ENCODE measurements at regions of chr11 and their contacts with region 1.

Region 1: GRCh38 chr11:2444821-2445745 is at the start of gene KCNQ1:
- DNase-seq: peak in 9 of 10 donors; percentile 14 to 65 (median 40)
- ATAC-seq: peak; percentile 49 to 54
- H3K4me3 Mint-ChIP-seq: peak within 1 kb of the TSS; percentile 89 to 97 (median 96)
- H3K27ac Mint-ChIP-seq: peak within 1 kb of the TSS; percentile 77 to 94 (median 88)
- H3K4me1 Mint-ChIP-seq: peaks cover 28 to 58% (median 53%) of the 10 kb centered on the region in 4 donors
- H3K27me3 Mint-ChIP-seq: no peaks in the 10 kb centered on the region
- polyA plus RNA-seq, gene KCNQ1: 8.7 to 22.9 (median 10.4) TPM

Region 2: DNA sequence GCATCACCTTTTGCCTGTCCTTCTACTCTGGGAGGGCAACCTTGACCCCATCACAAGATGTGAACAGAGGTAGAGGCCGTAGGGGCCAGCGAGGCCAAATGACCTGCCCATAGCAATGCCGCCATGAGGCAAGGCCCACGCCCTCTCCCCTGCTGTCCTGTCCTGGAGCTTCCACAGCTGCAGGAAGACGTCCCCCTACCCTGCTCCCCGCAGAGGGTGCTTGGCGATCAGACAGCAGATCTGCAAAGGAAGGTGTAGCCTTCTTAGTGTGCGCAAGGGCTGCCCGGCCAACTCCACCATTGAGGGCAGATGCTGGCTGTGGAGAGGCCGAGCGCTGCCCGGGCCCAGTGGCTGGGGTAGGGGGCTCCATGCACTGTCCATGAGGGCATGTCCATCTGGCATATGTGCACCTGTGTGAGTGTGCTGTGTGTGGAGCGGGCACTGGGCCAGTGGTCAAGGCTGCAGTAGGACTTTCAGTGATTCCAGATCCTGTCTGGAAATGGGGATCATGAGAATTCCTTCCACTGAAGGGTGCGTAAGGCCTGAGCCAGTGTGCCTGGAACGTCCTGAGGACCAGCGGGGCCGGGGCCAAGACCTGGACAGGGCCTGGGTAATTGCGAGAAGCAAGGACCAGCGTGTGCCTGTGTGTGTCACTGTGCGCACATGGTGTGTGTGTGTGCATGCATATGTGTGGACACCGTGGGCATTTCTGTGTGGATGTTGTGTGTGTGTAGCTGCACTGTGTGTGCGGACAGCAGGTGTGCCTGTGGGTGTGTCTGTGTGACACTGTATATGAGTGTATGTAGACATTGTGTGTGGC is 11.8 kb before region 1 on chr11:
- POLR2A ChIA-PET with region 1: no interaction called
- DNase-seq: peak in 1 of 10 donors; percentile 52
- ATAC-seq: no peak
- H3K4me3 Mint-ChIP-seq: no peak overlapping the region
- H3K27ac Mint-ChIP-seq: no peak overlapping the region
- H3K4me1 Mint-ChIP-seq: peaks cover 0 to 3% (median 1%) of the 10 kb centered on the region in 4 donors
- H3K27me3 Mint-ChIP-seq: no peaks in the 10 kb centered on the region

Region 3: GRCh38 chr11:2466869-2467698 is 22.0 kb after region 1 on chr11:
- POLR2A ChIA-PET with region 1: interaction called, 76 read pairs
- DNase-seq: peak in 9 of 10 donors; percentile 29 to 82 (median 69)
- ATAC-seq: peak; percentile 97 to 99
- H3K4me3 Mint-ChIP-seq: peak overlapping the region; percentile 68 to 86 (median 77)
- H3K27ac Mint-ChIP-seq: peak overlapping the region in 8 of 10 donors; percentile 48 to 92 (median 80)
- H3K4me1 Mint-ChIP-seq: peaks cover 38 to 84% (median 78%) of the 10 kb centered on the region in 4 donors
- H3K27me3 Mint-ChIP-seq: peaks cover 0 to 4% (median 0%) of the 10 kb centered on the region in 5 donors